ENCODE measurements at regions of chr1 and their contacts with region 1.

Region 1: DNA sequence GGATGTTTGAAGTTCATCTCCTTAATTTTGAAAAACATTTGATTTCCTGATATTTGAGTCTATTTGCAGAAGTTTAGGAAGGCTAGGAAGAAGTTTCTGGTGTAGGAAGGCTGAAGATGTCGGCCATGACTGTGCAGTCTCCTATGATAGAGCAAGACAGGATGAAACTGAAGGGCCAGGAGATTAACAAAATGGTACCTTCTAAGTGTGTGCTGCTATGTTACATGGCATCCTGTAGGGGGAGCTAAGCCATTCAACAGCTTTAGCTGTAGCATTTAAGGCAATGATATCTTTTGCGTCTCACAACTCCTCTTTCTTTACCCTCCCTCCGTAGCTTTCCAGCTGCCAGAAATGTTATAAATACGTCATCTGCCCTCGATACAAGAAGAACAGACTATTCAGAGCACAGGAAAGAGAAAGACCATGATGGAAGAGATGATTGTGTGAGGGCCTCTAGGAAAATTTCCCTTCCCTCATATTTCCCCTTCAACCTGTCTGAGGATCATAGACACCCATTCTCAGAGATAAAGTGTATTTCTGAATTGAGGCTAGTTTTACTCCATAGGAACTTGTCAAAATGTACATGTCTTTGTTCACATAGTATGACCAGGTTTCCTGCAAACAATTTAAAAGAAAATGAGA is 61.1 kb downstream of the XCL1 start:
- DNase-seq: no peak
- ATAC-seq: peak; percentile 92
- H3K4me3 ChIP-seq: no peak overlapping the region
- H3K27ac ChIP-seq: no peak overlapping the region
- H3K4me1 ChIP-seq: no peaks in the 10 kb centered on the region
- H3K27me3 ChIP-seq: no peaks in the 10 kb centered on the region
- CTCF ChIP-seq: peak; percentile 64 to 80 (median 73)
- EP300 ChIP-seq: no peak
- POLR2A ChIP-seq: no peak
- RAD21 ChIP-seq: peak; percentile 65

Region 2: GRCh38 chr1:168617974-168618750 is 19.3 kb before region 1 on chr1:
- CTCF ChIA-PET with region 1: interaction called, 17 read pairs
- POLR2A ChIA-PET with region 1: no interaction called
- RAD21 ChIA-PET with region 1: no interaction called
- SMC1A ChIA-PET with region 1: interaction called, 5 read pairs
- in situ Hi-C with region 1: no loop called
- intact Hi-C with region 1: no loop called
- DNase-seq: no peak
- ATAC-seq: no peak
- H3K4me3 ChIP-seq: no peak overlapping the region
- H3K27ac ChIP-seq: no peak overlapping the region
- H3K4me1 ChIP-seq: no peaks in the 10 kb centered on the region
- H3K27me3 ChIP-seq: peaks cover 0 to 3% of the 10 kb centered on the region in 2 experiments; a peak in 2 of 4 replicates
- CTCF ChIP-seq: no peak
- EP300 ChIP-seq: no peak
- POLR2A ChIP-seq: no peak
- RAD21 ChIP-seq: no peak

Region 3: GRCh38 chr1:168626326-168626725 is 11.1 kb before region 1 on chr1:
- CTCF ChIA-PET with region 1: interaction called, 11 read pairs
- POLR2A ChIA-PET with region 1: no interaction called
- RAD21 ChIA-PET with region 1: no interaction called
- SMC1A ChIA-PET with region 1: interaction called, 8 read pairs
- in situ Hi-C with region 1: no loop called
- intact Hi-C with region 1: no loop called
- DNase-seq: no peak
- ATAC-seq: no peak
- H3K4me3 ChIP-seq: no peak overlapping the region
- H3K27ac ChIP-seq: no peak overlapping the region
- H3K4me1 ChIP-seq: no peaks in the 10 kb centered on the region
- H3K27me3 ChIP-seq: no peaks in the 10 kb centered on the region
- CTCF ChIP-seq: no peak
- EP300 ChIP-seq: no peak
- POLR2A ChIP-seq: no peak
- RAD21 ChIP-seq: no peak

Region 4: DNA sequence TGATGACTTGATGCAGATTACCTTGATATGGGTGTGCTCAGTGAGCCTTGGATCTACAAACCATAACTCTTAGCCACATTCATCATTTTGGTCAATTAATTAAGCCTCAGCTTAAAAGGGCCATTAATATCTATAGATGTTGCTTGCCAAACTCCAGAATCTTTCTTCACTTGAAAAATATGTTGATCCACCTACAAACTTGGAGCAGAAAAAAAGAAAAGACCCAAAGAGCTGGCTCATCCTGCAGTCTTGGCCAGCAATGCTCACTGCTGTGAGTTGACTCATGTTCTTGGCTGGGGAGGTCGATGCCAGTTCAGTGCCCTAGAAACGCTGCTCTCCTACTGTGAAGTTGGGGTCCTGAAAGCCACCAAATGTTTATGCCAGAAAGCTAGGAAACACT is 16.1 kb after region 1 on chr1:
- CTCF ChIA-PET with region 1: interaction called, 14 read pairs
- POLR2A ChIA-PET with region 1: no interaction called
- RAD21 ChIA-PET with region 1: interaction called, 4 read pairs
- SMC1A ChIA-PET with region 1: interaction called, 9 read pairs
- in situ Hi-C with region 1: no loop called
- intact Hi-C with region 1: no loop called
- DNase-seq: no peak
- ATAC-seq: no peak
- H3K4me3 ChIP-seq: no peak overlapping the region
- H3K27ac ChIP-seq: no peak overlapping the region
- H3K4me1 ChIP-seq: no peaks in the 10 kb centered on the region
- H3K27me3 ChIP-seq: no peaks in the 10 kb centered on the region; a peak in 1 of 4 replicates
- CTCF ChIP-seq: no peak
- EP300 ChIP-seq: no peak
- POLR2A ChIP-seq: no peak
- RAD21 ChIP-seq: no peak

Region 5: DNA sequence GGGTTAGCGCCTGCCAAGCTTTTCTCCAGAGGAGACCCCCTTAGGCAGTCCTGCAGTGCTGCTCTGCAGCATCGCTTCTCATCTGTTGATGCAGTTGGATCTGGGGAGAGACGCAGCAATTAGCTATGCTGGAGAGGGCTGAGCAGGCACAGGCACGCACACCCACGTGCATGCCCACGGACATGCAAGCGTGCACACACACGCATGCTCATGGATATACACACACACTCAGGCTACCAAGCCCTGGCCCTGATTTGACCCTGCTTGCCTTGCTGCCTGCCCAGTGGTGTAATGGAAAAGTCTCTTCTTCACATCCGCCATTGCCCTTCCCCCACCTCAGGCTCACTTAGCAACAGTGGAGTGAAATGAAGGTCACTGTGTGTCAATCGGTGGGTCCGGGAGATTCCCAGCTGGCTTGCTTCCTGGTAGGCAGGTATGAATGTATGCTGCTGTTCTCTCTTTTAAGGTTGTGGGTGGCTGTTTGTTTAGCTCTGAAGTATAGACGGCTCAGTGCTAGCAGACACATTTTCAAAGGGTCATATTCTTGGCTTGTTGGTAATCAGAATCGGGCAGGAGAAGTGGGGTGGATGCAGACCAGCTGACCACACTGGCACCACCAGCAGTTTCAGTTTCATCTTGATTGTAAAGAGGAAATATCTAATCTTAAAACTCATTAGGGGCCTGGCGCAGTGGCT is 478.6 kb after region 1 on chr1:
- CTCF ChIA-PET with region 1: interaction called, 55 read pairs
- POLR2A ChIA-PET with region 1: no interaction called
- RAD21 ChIA-PET with region 1: interaction called, 53 read pairs
- SMC1A ChIA-PET with region 1: interaction called, 52 read pairs
- in situ Hi-C with region 1: no loop called
- intact Hi-C with region 1: no loop called
- DNase-seq: peak; percentile 66
- ATAC-seq: peak; percentile 89
- H3K4me3 ChIP-seq: no peak overlapping the region
- H3K27ac ChIP-seq: 0 out of 2 replicates have a peak overlapping the region, but pooled peaks have one; percentile 20
- H3K4me1 ChIP-seq: peaks cover 8% of the 10 kb centered on the region
- H3K27me3 ChIP-seq: no peaks in the 10 kb centered on the region
- CTCF ChIP-seq: no peak
- EP300 ChIP-seq: 0 out of 4 replicates have a peak, but pooled peaks of 1 of the 2 experiments have one; percentile 10
- POLR2A ChIP-seq: no peak
- RAD21 ChIP-seq: no peak

Region 6: DNA sequence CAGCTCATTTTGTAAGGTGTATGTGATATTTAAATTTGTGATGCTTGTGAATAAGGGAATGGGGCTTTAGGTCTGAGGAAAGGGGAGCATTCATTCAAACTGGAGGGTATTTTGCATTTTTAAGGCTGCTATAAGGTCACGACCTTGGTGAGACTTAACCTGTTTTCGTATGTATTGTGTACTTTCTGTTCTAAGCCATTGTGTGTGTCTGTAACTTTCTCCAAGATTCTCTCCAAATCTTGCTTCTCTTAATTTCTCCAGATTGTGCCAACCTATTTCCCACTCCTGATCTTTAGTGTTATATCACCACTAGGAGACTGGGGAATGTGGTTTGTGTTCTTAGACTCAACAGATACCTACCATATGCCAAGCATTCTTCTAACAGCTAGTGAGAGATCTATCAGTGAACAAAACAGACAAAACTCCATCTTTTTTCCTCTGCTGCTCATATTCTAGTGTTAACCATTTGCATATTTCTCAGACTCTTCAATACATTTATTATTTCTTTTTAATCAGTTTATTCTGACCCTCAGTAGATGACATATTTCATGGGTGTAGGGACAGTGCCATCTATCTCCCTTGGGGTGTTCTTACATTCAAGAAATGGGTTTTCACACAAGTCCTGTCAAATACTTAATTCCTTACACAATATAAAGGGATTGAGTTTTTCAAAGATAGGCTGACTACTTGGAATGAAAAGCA is 496.5 kb after region 1 on chr1:
- CTCF ChIA-PET with region 1: interaction called, 6 read pairs
- POLR2A ChIA-PET with region 1: no interaction called
- RAD21 ChIA-PET with region 1: interaction called, 15 read pairs
- SMC1A ChIA-PET with region 1: interaction called, 20 read pairs
- in situ Hi-C with region 1: no loop called
- intact Hi-C with region 1: no loop called
- DNase-seq: no peak
- ATAC-seq: peak; percentile 49; the same call in 1 of the 3 replicates
- H3K4me3 ChIP-seq: no peak overlapping the region
- H3K27ac ChIP-seq: no peak overlapping the region
- H3K4me1 ChIP-seq: no peaks in the 10 kb centered on the region
- H3K27me3 ChIP-seq: no peaks in the 10 kb centered on the region
- CTCF ChIP-seq: peak in 2 of 3 experiments; percentile 30 to 58; a peak in 3 of 6 replicates
- EP300 ChIP-seq: no peak
- POLR2A ChIP-seq: no peak
- RAD21 ChIP-seq: peak; percentile 65

Region 7: DNA sequence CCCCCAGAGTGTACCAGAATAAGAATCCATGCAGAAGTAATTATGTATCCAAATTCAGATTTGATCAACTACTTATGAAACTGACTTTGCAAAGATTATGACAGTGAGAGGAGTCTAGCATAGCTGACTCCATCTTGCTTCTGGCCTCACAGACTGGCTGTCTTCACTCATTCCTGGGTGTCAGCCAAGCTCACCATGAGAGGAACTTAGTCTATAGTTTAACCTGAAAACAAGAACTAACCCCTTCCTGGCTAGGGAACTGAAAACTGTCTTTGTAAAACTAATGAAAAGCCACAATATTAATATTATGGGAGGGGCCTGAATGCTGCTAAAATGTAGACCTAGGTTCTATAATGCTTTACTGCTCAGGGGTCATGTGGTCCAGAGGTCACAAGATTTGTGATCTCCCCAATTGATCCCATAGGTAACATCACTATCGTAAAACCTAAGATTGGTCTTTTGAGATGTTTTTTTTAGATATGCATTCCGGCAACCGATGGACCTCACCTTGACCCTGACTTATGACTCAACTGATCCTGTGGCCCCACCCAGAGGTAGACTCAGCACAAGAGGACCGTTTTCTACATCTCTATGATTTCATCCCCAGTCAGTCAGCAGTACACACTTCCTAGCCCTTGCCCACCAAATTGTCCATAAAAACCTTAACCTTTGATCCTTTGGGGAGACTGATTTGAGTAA is 524.2 kb after region 1 on chr1:
- CTCF ChIA-PET with region 1: interaction called, 10 read pairs
- POLR2A ChIA-PET with region 1: no interaction called
- RAD21 ChIA-PET with region 1: interaction called, 11 read pairs
- SMC1A ChIA-PET with region 1: interaction called, 20 read pairs
- in situ Hi-C with region 1: no loop called
- intact Hi-C with region 1: loop called (anchors 5 kb)
- DNase-seq: peak; percentile 34
- ATAC-seq: peak; percentile 95
- H3K4me3 ChIP-seq: no peak overlapping the region
- H3K27ac ChIP-seq: no peak overlapping the region; the same call in 1 of the 2 replicates
- H3K4me1 ChIP-seq: peaks cover 12% of the 10 kb centered on the region; the same call in 1 of the 2 replicates
- H3K27me3 ChIP-seq: no peaks in the 10 kb centered on the region
- CTCF ChIP-seq: peak in 1 of 3 experiments; percentile 5; a peak in 1 of 6 replicates
- EP300 ChIP-seq: no peak; a peak in 2 of 4 replicates
- POLR2A ChIP-seq: no peak
- RAD21 ChIP-seq: peak; percentile 66

Measured in GM12878 (cell line).